ENCODE measurements at regions of chr20 and their contacts with region 1.

Region 1: GRCh38 chr20:35303735-35304491 is 11.7 kb upstream of the FAM83C start:
- DNase-seq: peak; percentile 80
- ATAC-seq: peak; percentile 61

Region 2: GRCh38 chr20:35240083-35240812 is 63.7 kb before region 1 on chr20:
- intact Hi-C with region 1: no loop called
- DNase-seq: no peak
- ATAC-seq: no peak

Region 3: GRCh38 chr20:35447082-35447789 is 143.3 kb after region 1 on chr20:
- intact Hi-C with region 1: loop called (anchors 5 kb)
- DNase-seq: peak; percentile 92
- ATAC-seq: peak; percentile 94

Measured in Right ventricle myocardium superior (tissue), 1 donor.